CD8-positive, alpha-beta T cell (primary cell): ENCODE measurements at regions of chr13 and their contacts with region 1.

Region 1: GRCh38 chr13:25292301-25292700 is 5.0 kb upstream of the MTMR6 start:
- DNase-seq: peak in 1 of 9 experiments; percentile 37
- ATAC-seq: peak; percentile 47
- H3K4me3 ChIP-seq: no peak overlapping the region
- H3K4me3 Mint-ChIP-seq: no peak overlapping the region
- H3K27ac ChIP-seq: no peak overlapping the region
- H3K27ac Mint-ChIP-seq: no peak overlapping the region
- H3K4me1 ChIP-seq: no peaks in the 10 kb centered on the region
- H3K4me1 Mint-ChIP-seq: peaks cover 10% of the 10 kb centered on the region
- H3K27me3 ChIP-seq: peaks cover 0 to 2% of the 10 kb centered on the region in 2 experiments
- H3K27me3 Mint-ChIP-seq: peaks cover 23% of the 10 kb centered on the region
- CTCF ChIP-seq: no peak

Region 2: DNA sequence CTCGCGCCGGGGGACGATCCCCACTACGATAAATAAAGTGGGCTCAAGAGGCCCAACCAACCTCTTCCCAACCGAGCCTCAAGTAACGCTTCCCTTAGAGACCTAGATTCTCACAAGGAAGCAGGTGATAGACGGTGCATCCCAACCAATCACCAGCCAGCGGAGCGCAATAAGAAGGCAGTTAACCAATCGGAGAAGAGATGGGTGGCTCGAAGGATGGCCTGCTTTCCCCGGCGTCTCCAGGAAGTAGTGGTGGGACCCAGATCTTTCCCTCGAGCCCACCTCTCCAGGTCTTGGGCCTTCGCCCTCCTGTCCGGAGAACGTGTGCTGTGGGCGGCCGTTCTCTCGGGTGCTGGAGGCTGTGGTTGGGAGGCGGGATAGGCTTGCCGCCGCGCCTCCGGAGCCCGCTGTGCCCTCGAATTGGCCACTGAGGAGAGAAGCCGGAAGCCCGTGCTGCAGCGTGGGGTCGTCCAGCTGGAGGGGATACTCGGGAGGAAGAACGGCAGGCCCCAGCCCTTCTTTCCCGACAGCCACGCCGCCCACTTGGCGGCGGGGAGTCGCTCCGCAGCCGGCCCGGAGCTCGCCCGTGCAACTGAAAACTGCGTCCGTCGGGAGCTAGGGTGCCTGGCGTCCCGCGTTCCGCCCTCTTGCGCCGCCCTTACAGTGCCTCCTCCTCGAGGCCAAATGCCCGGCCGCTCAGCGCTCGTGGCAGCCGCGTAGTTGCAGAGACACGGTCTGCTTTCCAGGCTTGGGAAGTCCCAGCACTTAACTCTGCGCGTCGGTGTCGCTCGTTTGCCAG is 929.6 kb after region 1 on chr13 and contains the start of gene RNF6:
- CTCF ChIA-PET with region 1: no interaction called
- POLR2A ChIA-PET with region 1: no interaction called
- intact Hi-C with region 1: loop called in 1 of 2 experiments (anchors 10 kb)
- DNase-seq: peak; percentile 73 to 97 (median 86)
- ATAC-seq: peak; percentile 92
- H3K4me3 ChIP-seq: peak within 1 kb of the TSS; percentile 97 to 99
- H3K4me3 Mint-ChIP-seq: peak within 1 kb of the TSS; percentile 99
- H3K27ac ChIP-seq: peak within 1 kb of the TSS; percentile 90 to 98
- H3K27ac Mint-ChIP-seq: peak within 1 kb of the TSS; percentile 100
- H3K4me1 ChIP-seq: peaks cover 26% of the 10 kb centered on the region
- H3K4me1 Mint-ChIP-seq: peaks cover 45% of the 10 kb centered on the region
- H3K27me3 ChIP-seq: no peaks in the 10 kb centered on the region
- H3K27me3 Mint-ChIP-seq: no peaks in the 10 kb centered on the region
- CTCF ChIP-seq: no peak
- total RNA-seq, gene RNF6: 50.3 to 55.0 TPM

Region 3: GRCh38 chr13:26266311-26266710 is 974.0 kb after region 1 on chr13:
- CTCF ChIA-PET with region 1: no interaction called
- POLR2A ChIA-PET with region 1: no interaction called
- intact Hi-C with region 1: no loop called
- DNase-seq: no peak
- ATAC-seq: no peak
- H3K4me3 ChIP-seq: no peak overlapping the region
- H3K4me3 Mint-ChIP-seq: no peak overlapping the region
- H3K27ac ChIP-seq: no peak overlapping the region
- H3K27ac Mint-ChIP-seq: no peak overlapping the region
- H3K4me1 ChIP-seq: peaks cover 8% of the 10 kb centered on the region
- H3K4me1 Mint-ChIP-seq: peaks cover 57% of the 10 kb centered on the region
- H3K27me3 ChIP-seq: no peaks in the 10 kb centered on the region
- H3K27me3 Mint-ChIP-seq: no peaks in the 10 kb centered on the region
- CTCF ChIP-seq: no peak